GM23248 (cell line): ENCODE measurements at regions of chr17 and their contacts with region 1.

Region 1: DNA sequence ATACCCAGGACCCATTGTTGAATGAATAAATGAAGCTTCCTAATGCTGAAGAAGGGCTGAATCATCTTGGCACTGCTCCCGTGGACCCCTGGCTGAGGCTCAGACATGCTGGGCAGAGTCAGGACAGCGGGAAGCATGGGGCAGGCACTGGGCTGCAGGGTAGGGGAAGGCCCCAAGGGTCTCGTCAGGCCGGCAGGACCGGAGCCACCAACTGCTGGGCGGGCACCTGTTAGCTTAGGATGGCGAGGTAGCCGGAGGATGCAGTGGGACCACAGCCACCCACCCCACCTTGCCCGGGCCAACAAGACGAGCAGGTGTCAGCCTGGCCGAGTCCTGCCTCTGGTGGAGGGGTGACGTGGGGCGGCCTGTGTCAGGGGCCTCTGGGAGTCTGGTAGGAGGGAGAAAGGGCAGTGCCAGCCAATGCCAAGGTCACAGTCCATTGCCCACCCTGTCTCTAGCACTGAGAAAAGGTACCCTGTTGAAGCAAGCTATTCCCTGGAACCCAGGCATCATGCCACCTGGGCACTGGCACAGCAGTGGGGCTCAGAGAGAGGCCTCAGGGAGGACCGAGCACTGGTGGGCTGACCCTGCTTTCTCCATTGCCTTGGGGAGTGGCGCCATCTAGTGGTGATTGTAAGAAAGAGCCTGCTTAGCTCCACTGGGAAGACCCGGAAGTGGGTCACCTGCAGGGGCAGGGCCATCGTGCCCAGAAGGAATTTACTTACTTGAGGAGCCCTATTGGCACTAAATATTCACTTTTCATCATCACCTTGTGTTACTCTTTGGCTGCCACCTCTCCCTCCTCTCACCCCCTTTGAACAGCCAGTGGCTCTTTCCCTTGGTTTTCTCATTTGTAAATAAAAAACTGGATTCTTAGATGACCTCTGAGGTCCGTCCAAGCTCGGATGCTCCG is 3.0 kb upstream of the DLX3 start:
- DNase-seq: peak; percentile 86
- H3K4me3 ChIP-seq: no peak overlapping the region
- H3K27ac ChIP-seq: no peak overlapping the region
- H3K4me1 ChIP-seq: 0 out of 2 replicates have a peak, but pooled peaks cover 6% of the 10 kb centered on the region
- H3K27me3 ChIP-seq: peaks cover 39% of the 10 kb centered on the region

Region 2: GRCh38 chr17:49873466-49873865 is 124.6 kb before region 1 on chr17:
- in situ Hi-C with region 1: loop called (anchors 5 kb)
- DNase-seq: no peak
- H3K4me3 ChIP-seq: no peak overlapping the region
- H3K27ac ChIP-seq: no peak overlapping the region
- H3K4me1 ChIP-seq: no peaks in the 10 kb centered on the region
- H3K27me3 ChIP-seq: no peaks in the 10 kb centered on the region; the same call in 1 of the 2 replicates